Lower lobe of right lung (tissue), 2 donors: ENCODE measurements at regions of chr12 and their contacts with region 1.

Region 1: GRCh38 chr12:121673003-121673511 is 3.6 kb upstream of the MORN3 start:
- DNase-seq: no peak
- ATAC-seq: peak; percentile 30 to 47
- H3K4me3 ChIP-seq: peak overlapping the region; percentile 57
- H3K27ac ChIP-seq: peak overlapping the region; percentile 60
- H3K4me1 ChIP-seq: peaks cover 9% of the 10 kb centered on the region
- H3K27me3 ChIP-seq: no peaks in the 10 kb centered on the region
- CTCF ChIP-seq: no peak

Region 2: DNA sequence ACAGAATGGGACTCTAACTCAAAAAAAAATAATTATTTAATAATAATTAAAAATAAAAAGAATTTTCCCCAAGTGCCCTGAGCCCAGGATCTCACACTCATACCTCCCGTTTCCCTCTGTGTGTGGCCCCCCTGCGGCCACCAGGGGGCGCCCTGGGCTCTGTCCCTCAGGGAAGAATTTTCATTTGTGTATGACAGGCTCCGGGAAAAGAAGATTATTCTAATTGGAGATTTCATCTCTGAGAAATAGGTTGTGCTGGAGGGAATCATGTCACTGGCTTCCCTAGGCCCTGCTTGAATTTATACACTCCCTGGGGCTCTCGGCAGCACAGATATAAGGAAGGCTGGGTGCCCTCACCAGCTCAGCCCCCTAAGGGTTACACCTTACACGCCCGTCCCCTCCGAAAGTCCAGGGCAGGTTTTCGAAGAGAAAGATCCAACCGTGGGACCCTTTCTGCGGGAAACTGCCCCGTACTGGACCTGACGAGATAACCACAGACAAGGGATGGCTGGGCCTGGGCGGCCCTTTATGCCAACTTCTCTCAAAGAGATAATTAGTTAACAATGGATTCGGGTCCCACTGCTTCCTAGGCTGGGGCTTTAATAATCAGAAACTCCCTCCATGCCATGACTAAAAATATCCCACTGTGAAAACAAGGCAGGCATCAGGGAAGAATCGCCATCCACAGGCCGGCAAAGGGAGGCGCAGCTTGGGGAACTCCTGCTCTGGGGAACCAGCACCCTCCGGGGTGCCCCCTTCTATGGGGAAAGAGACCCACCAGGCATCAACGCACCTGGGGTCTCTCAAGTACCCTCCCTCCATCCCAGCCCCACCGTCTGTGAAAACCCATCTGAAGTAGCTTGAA is 172.9 kb before region 1 on chr12:
- intact Hi-C with region 1: loop called (anchors 10 kb)
- DNase-seq: peak; percentile 81
- ATAC-seq: peak; percentile 90 to 91
- H3K4me3 ChIP-seq: peak overlapping the region; percentile 14
- H3K27ac ChIP-seq: peak overlapping the region; percentile 8
- H3K4me1 ChIP-seq: peaks cover 10% of the 10 kb centered on the region
- H3K27me3 ChIP-seq: no peaks in the 10 kb centered on the region
- CTCF ChIP-seq: peak; percentile 100